ENCODE measurements at regions of chr4 and their contacts with region 1.

Region 1: GRCh38 chr4:1712216-1713002 is at the start of gene SLBP:
- DNase-seq: peak; percentile 98 to 99 (median 99)
- ATAC-seq: peak; percentile 86
- H3K4me3 ChIP-seq: peak within 1 kb of the TSS; percentile 95
- H3K4me3 Mint-ChIP-seq: peak within 1 kb of the TSS; percentile 89
- H3K27ac ChIP-seq: peak within 1 kb of the TSS; percentile 79 to 91
- H3K27ac Mint-ChIP-seq: peak within 1 kb of the TSS; percentile 93
- H3K4me1 ChIP-seq: peaks cover 60% of the 10 kb centered on the region
- H3K4me1 Mint-ChIP-seq: peaks cover 49% of the 10 kb centered on the region
- H3K27me3 ChIP-seq: no peaks in the 10 kb centered on the region
- H3K27me3 Mint-ChIP-seq: no peaks in the 10 kb centered on the region
- CTCF ChIP-seq: no peak
- total RNA-seq, gene SLBP: 45.8 to 47.6 TPM

Region 2: GRCh38 chr4:373062-373839 is 1339.2 kb before region 1 on chr4:
- CTCF ChIA-PET with region 1: no interaction called
- POLR2A ChIA-PET with region 1: no interaction called
- intact Hi-C with region 1: no loop called
- DNase-seq: no peak
- ATAC-seq: no peak
- H3K4me3 ChIP-seq: no peak overlapping the region
- H3K4me3 Mint-ChIP-seq: no peak overlapping the region
- H3K27ac ChIP-seq: no peak overlapping the region
- H3K27ac Mint-ChIP-seq: no peak overlapping the region
- H3K4me1 ChIP-seq: no peaks in the 10 kb centered on the region
- H3K4me1 Mint-ChIP-seq: no peaks in the 10 kb centered on the region
- H3K27me3 ChIP-seq: no peaks in the 10 kb centered on the region
- H3K27me3 Mint-ChIP-seq: no peaks in the 10 kb centered on the region
- CTCF ChIP-seq: no peak

Region 3: GRCh38 chr4:1289207-1290164 is 422.9 kb before region 1 on chr4 and contains the start of gene MAEA:
- CTCF ChIA-PET with region 1: no interaction called
- POLR2A ChIA-PET with region 1: no interaction called
- intact Hi-C with region 1: loop called in 1 of 2 experiments (anchors 5 kb)
- DNase-seq: peak; percentile 94 to 98 (median 96)
- ATAC-seq: peak; percentile 99
- H3K4me3 ChIP-seq: peak within 1 kb of the TSS; percentile 73
- H3K4me3 Mint-ChIP-seq: peak within 1 kb of the TSS; percentile 93
- H3K27ac ChIP-seq: peak within 1 kb of the TSS; percentile 60 to 83
- H3K27ac Mint-ChIP-seq: peak within 1 kb of the TSS; percentile 93
- H3K4me1 ChIP-seq: peaks cover 46% of the 10 kb centered on the region
- H3K4me1 Mint-ChIP-seq: peaks cover 45% of the 10 kb centered on the region
- H3K27me3 ChIP-seq: no peaks in the 10 kb centered on the region
- H3K27me3 Mint-ChIP-seq: no peaks in the 10 kb centered on the region
- CTCF ChIP-seq: no peak
- total RNA-seq, gene MAEA: 61.5 to 63.2 TPM

Region 4: DNA sequence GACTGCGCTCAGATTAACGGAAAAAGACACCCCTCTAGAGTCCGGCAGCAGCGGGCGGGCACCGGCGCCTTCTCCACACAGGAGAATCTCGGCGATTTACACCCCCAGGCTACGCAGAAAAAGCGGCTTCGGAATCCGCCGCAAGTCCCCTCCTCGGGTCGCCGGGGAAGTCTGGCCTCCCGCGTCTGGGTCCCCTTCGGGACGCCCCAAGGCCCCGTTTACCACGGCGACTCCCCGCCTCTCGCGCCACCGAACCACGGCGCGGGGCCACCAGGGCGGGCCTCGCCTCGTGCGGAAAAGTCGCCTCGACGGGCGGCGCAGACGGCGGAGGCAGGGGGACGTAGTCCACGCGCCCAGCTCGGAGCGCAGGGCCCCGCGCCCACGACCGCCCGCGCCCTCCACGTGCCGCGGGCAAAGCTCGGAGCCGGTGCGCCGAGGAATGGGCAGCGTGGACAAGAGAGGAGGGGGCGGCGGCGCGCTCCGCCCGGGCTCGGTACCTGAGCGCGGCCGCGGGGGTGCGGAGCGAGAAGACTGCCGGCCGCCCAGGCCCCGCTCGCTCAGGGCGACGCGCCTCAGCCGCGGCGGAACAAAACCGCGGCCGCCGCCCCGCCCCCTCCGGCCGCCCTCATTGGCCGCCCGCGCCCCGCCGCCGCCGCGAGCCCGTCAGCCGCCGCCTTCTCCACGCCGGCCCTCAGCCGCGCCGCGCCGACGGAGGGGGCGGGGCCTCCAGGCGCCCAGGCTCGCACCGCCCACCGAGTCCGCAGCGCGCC is 28.5 kb before region 1 on chr4 and contains the start of gene FAM53A:
- CTCF ChIA-PET with region 1: interaction called, 3 read pairs
- POLR2A ChIA-PET with region 1: interaction called, 7 read pairs
- intact Hi-C with region 1: loop called in 1 of 2 experiments (anchors 1 kb)
- DNase-seq: peak in 11 of 14 experiments; percentile 7 to 96 (median 41)
- ATAC-seq: peak; percentile 91
- H3K4me3 ChIP-seq: peak within 1 kb of the TSS; percentile 58
- H3K4me3 Mint-ChIP-seq: peak within 1 kb of the TSS; percentile 93
- H3K27ac ChIP-seq: no peak within 1 kb of the TSS
- H3K27ac Mint-ChIP-seq: peak within 1 kb of the TSS; percentile 85
- H3K4me1 ChIP-seq: peaks cover 19% of the 10 kb centered on the region
- H3K4me1 Mint-ChIP-seq: peaks cover 13% of the 10 kb centered on the region
- H3K27me3 ChIP-seq: no peaks in the 10 kb centered on the region
- H3K27me3 Mint-ChIP-seq: no peaks in the 10 kb centered on the region
- CTCF ChIP-seq: no peak
- total RNA-seq, gene FAM53A: 0.93 to 2.4 TPM

Region 5: DNA sequence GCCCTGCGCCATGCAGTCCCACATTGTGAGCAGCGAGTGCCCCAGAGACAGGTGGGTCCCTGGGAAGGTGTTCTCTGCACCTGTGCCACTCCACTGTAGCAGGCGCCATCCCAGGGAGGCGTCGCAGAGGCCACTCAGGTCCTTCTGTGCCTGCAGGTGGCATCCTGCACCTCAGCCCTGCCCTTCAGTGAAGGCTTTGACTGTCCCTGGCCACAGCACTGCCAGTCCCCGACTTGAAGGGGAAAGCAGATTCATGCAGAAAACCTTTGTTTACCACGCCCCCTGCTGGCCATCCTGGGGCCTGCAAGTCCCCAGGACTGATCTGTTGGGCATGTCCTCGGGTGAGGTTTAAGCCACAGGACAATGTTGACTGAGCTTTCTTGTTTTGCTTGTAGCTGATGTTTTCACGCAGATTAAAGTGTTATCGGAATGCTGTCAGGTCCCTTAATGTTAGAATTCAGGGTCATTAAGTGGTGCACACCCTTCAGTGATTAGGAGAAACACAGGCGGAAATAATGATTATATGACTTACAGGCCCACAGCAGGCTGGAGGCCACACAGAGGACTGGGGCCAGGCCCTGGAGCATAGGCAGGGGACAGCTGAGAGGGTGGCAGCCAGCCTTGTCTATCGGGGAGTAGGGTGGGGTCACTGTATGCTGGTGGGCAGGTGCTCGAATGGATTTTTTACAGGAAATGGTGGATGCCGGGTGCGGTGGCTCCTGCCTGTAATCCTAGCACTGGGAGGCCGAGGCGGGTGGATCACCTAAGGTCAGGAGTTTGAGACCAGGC is 13.9 kb after region 1 on chr4:
- CTCF ChIA-PET with region 1: interaction called, 7 read pairs
- POLR2A ChIA-PET with region 1: interaction called, 205 read pairs
- intact Hi-C with region 1: loop called (anchors 1 kb)
- DNase-seq: peak; percentile 84 to 96 (median 90)
- ATAC-seq: peak; percentile 37
- H3K4me3 ChIP-seq: no peak overlapping the region
- H3K4me3 Mint-ChIP-seq: peak overlapping the region; percentile 31
- H3K27ac ChIP-seq: no peak overlapping the region
- H3K27ac Mint-ChIP-seq: peak overlapping the region; percentile 63
- H3K4me1 ChIP-seq: peaks cover 95% of the 10 kb centered on the region
- H3K4me1 Mint-ChIP-seq: peaks cover 57% of the 10 kb centered on the region
- H3K27me3 ChIP-seq: no peaks in the 10 kb centered on the region
- H3K27me3 Mint-ChIP-seq: no peaks in the 10 kb centered on the region
- CTCF ChIP-seq: peak; percentile 96

Region 6: DNA sequence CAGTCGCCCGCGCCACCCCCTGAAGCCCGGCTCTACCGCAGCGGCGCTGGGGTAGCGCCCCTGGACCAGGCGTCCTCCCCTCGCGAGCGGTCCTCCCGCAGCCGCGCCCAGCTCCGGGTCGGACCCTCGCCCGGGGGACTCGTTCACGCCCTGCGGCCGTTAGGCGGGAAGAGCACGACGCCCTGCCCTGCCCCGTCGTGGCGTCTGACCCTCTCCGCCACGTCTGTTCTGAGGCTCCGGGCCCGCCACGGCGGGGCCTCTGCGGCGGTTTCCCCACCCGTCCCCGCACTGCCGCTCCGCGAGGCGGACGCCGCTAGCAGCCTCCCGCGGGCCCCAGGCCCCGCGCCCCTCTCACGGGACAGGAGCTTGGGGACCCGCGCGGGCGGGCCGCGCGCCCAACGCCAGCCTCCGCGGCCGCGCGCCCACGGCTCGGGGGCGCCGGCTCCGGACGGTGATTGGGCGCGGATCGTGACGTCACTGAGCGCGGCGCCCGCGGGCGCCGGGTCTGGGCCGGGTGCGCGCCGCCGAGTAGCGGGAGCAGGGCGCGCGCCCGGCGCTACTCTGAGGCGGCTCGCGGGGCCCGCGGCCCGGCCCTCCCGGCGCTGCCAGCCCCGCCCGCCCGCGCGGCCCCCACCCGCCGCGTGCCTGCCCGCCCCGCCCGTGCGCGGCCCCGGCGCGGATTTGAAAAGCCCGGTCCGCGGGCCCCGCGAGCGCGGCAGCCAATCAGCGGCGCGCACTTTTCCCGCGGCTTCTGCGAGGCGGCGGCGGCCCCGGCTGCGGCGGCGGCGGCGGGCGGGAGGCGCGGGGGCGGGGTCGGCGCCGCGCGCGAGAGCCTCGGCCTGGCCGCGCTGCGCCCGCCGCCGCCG is 158.4 kb after region 1 on chr4 and contains the start of gene NSD2:
- CTCF ChIA-PET with region 1: no interaction called
- POLR2A ChIA-PET with region 1: interaction called, 11 read pairs
- intact Hi-C with region 1: loop called in 1 of 2 experiments (anchors 2 kb)
- DNase-seq: peak; percentile 80 to 97 (median 88)
- ATAC-seq: peak; percentile 63
- H3K4me3 ChIP-seq: peak within 1 kb of the TSS; percentile 63
- H3K4me3 Mint-ChIP-seq: peak within 1 kb of the TSS; percentile 92
- H3K27ac ChIP-seq: peak within 1 kb of the TSS; percentile 79 to 94
- H3K27ac Mint-ChIP-seq: peak within 1 kb of the TSS; percentile 89
- H3K4me1 ChIP-seq: peaks cover 29% of the 10 kb centered on the region
- H3K4me1 Mint-ChIP-seq: peaks cover 34% of the 10 kb centered on the region
- H3K27me3 ChIP-seq: no peaks in the 10 kb centered on the region
- H3K27me3 Mint-ChIP-seq: peaks cover 5% of the 10 kb centered on the region
- CTCF ChIP-seq: no peak
- total RNA-seq, gene NSD2: 42.4 to 45.8 TPM

Region 7: DNA sequence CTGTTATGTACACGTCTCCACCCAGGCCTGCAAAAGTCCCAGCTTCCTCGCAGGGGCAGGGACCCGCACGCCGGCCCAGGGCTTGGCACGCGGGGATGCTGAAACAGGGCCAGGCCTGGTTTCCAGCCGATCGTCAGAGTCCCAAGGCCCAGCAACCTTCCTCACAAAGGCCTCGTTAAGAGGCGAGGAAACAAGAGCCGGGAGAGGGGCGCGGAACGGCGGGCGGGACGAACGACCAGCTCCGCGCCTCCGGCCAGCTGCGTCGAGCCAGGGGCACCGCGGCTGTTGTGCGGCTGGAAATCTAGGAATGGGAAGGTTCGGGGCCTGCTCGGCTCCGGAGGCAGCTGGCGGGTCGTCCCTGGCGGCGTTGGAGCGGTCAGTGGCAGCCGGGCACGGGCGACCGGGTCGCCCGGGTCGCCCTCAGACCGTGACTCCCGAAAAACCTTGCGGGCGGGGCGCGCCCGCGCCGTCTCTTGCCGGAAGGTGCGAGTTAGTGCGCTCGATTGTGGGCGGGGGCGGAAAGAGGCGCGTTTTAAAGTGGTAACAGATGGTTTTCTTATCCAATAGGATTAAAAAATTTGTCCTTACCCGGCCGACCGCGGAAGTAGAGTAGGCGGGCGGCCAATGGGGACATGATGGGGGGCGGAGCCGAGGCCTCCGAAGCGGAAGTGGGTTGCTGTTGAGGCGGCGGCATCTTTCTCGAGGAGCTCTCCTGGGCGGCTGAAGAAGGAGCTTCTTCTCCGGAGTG is 756.2 kb after region 1 on chr4 and contains the start of gene RNF4:
- CTCF ChIA-PET with region 1: no interaction called
- POLR2A ChIA-PET with region 1: interaction called, 7 read pairs
- intact Hi-C with region 1: loop called in 1 of 2 experiments (anchors 10 kb)
- DNase-seq: peak; percentile 89 to 98 (median 94)
- ATAC-seq: peak; percentile 84
- H3K4me3 ChIP-seq: peak within 1 kb of the TSS; percentile 98
- H3K4me3 Mint-ChIP-seq: peak within 1 kb of the TSS; percentile 94
- H3K27ac ChIP-seq: peak within 1 kb of the TSS; percentile 96 to 97
- H3K27ac Mint-ChIP-seq: peak within 1 kb of the TSS; percentile 94
- H3K4me1 ChIP-seq: peaks cover 48% of the 10 kb centered on the region
- H3K4me1 Mint-ChIP-seq: peaks cover 48% of the 10 kb centered on the region
- H3K27me3 ChIP-seq: no peaks in the 10 kb centered on the region
- H3K27me3 Mint-ChIP-seq: no peaks in the 10 kb centered on the region
- CTCF ChIP-seq: no peak
- total RNA-seq, gene RNF4: 106 to 109 TPM

Measured in CD4-positive, alpha-beta T cell (primary cell).